ENCODE measurements at regions of chr17 and their contacts with region 1.

Region 1: GRCh38 chr17:53780320-53780719 is 42.4 kb upstream of the KIF2B start:
- DNase-seq: no peak
- H3K4me3 ChIP-seq: no peak overlapping the region
- H3K27ac ChIP-seq: no peak overlapping the region
- H3K4me1 ChIP-seq: no peaks in the 10 kb centered on the region
- H3K27me3 ChIP-seq: no peaks in the 10 kb centered on the region
- CTCF ChIP-seq: no peak
- EP300 ChIP-seq: no peak
- POLR2A ChIP-seq: no peak

Region 2: GRCh38 chr17:53696286-53696685 is 84.0 kb before region 1 on chr17:
- in situ Hi-C with region 1: no loop called
- intact Hi-C with region 1: no loop called
- DNase-seq: no peak
- H3K4me3 ChIP-seq: no peak overlapping the region
- H3K27ac ChIP-seq: no peak overlapping the region
- H3K4me1 ChIP-seq: no peaks in the 10 kb centered on the region
- H3K27me3 ChIP-seq: no peaks in the 10 kb centered on the region
- CTCF ChIP-seq: no peak
- EP300 ChIP-seq: no peak
- POLR2A ChIP-seq: no peak

Region 3: DNA sequence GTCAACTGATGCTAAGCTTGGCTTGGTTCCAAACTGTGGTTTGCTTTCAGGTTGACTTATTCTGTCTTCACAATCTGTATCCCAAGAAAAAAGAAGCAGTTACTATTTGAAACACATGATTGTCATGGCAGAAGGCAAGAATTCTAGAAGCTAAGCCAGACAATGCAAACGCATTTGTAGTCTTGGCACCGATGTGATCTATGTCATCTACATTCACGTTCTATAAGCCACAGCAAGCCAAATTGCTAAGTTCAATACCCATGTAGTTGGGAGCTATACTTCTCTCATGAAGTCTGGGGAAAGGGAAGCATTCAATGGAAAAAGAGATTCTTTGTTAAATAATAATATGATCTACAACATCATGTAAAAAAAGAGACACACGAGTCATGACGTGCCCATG is 24.1 kb after region 1 on chr17:
- in situ Hi-C with region 1: no loop called
- intact Hi-C with region 1: loop called (anchors 1 kb)
- DNase-seq: no peak
- H3K4me3 ChIP-seq: no peak overlapping the region
- H3K27ac ChIP-seq: no peak overlapping the region
- H3K4me1 ChIP-seq: no peaks in the 10 kb centered on the region
- H3K27me3 ChIP-seq: no peaks in the 10 kb centered on the region
- CTCF ChIP-seq: no peak
- EP300 ChIP-seq: no peak
- POLR2A ChIP-seq: no peak

Region 4: DNA sequence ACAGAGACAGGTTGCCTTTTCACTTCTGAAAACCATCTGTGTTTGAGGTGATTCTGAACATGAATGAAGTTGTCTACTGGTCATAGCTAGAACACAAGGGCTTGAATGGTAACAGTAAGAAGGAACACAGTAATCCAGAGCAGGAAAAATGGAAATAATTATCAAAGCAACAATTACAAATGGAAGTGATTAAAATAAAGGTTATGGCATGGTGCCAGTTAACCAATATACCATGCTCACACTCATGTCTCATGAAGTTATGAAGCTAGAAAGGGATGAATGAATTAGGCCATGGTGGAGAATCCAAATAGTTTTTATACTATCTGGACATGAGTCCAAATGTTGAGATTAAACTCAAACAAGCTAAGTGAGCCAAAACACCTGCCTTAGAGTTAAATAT is 52.1 kb after region 1 on chr17:
- in situ Hi-C with region 1: no loop called
- intact Hi-C with region 1: no loop called
- DNase-seq: no peak
- H3K4me3 ChIP-seq: no peak overlapping the region
- H3K27ac ChIP-seq: no peak overlapping the region
- H3K4me1 ChIP-seq: no peaks in the 10 kb centered on the region
- H3K27me3 ChIP-seq: no peaks in the 10 kb centered on the region
- CTCF ChIP-seq: no peak
- EP300 ChIP-seq: no peak
- POLR2A ChIP-seq: no peak